ENCODE measurements at regions of chr3 and their contacts with region 1.

Region 1: DNA sequence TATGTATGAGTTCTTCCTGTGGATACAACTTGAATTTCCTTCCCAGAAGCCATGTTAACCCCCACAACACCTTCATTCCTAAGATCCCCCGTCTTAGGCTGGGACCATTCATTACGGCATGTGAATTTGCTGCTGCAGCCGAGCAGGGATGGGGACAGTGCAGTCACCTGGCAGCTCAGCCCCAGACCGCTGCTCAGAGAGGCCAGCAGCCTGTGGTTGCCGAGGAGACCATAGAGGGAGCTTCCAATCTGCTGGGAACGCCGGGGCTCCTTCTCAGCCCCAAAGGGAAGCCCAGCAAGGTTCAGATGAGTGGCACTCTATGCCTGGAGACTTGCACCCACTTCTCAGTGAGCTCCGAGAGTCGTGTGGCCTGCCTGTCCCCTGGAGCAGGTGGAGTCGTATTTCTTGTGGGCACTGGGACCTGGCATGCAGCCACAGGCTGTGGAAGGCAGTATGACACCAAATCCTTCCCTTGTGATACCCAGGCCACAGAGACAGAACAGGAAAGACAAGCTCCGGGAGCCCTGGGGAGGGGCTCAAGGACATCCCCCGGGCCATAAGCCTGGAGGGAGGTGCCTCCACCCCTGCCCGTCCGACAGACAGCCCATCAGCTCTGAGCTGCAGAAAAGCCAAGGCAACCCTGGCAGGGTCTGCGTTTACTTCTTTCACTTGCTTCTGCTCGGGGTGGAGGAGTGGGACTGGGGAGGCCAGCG is 167.3 kb downstream of the FAM43A start:
- DNase-seq: peak in 1 of 2 donors; percentile 85
- ATAC-seq: peak; percentile 62 to 82 (median 73)
- H3K4me3 ChIP-seq: peak overlapping the region; percentile 25
- H3K27ac ChIP-seq: peak overlapping the region; percentile 53
- H3K4me1 ChIP-seq: peaks cover 22% of the 10 kb centered on the region
- H3K27me3 ChIP-seq: no peaks in the 10 kb centered on the region
- CTCF ChIP-seq: no peak

Region 2: GRCh38 chr3:194691481-194692283 is 161.3 kb before region 1 on chr3:
- intact Hi-C with region 1: loop called (anchors 10 kb)
- DNase-seq: no peak
- ATAC-seq: no peak
- H3K4me3 ChIP-seq: no peak overlapping the region
- H3K27ac ChIP-seq: no peak overlapping the region
- H3K4me1 ChIP-seq: peaks cover 24% of the 10 kb centered on the region
- H3K27me3 ChIP-seq: no peaks in the 10 kb centered on the region
- CTCF ChIP-seq: no peak

Region 3: DNA sequence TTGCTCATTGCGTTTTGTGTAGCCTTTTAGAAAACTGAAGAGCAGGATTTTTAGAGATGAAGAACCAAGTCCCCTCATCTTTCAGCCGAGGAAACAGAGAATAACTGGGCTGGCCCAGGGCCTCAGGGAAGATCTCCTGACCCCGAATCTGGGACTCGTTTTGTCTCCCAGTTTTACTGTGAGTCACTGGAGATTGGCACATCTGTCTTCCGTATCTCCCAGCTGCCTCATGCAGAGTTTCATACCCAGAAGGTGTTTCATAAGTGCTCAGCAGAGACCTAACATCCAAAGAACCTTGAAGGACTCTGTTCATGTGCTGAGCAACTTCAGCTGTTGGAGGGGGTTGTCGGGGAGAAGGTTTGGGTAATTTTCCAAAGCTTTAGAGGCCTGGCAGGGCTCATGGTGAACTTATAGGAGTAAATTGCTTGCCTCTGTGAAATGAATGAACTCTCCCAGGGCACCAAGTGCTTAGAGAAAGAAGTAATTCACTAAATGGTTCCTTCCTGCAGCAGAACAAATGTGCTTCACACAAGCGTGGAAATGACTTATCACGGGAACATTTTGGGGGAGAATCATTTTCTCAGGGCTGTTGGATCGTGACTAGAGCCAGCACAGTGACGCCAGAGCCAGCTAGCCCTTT is 45.9 kb before region 1 on chr3:
- intact Hi-C with region 1: no loop called
- DNase-seq: no peak
- ATAC-seq: no peak
- H3K4me3 ChIP-seq: no peak overlapping the region
- H3K27ac ChIP-seq: no peak overlapping the region
- H3K4me1 ChIP-seq: no peaks in the 10 kb centered on the region
- H3K27me3 ChIP-seq: no peaks in the 10 kb centered on the region
- CTCF ChIP-seq: no peak

Measured in psoas muscle (tissue), 8 donors.